Mucosa of descending colon (tissue), 3 donors: ENCODE measurements at regions of chr2 and their contacts with region 1.

Region 1: DNA sequence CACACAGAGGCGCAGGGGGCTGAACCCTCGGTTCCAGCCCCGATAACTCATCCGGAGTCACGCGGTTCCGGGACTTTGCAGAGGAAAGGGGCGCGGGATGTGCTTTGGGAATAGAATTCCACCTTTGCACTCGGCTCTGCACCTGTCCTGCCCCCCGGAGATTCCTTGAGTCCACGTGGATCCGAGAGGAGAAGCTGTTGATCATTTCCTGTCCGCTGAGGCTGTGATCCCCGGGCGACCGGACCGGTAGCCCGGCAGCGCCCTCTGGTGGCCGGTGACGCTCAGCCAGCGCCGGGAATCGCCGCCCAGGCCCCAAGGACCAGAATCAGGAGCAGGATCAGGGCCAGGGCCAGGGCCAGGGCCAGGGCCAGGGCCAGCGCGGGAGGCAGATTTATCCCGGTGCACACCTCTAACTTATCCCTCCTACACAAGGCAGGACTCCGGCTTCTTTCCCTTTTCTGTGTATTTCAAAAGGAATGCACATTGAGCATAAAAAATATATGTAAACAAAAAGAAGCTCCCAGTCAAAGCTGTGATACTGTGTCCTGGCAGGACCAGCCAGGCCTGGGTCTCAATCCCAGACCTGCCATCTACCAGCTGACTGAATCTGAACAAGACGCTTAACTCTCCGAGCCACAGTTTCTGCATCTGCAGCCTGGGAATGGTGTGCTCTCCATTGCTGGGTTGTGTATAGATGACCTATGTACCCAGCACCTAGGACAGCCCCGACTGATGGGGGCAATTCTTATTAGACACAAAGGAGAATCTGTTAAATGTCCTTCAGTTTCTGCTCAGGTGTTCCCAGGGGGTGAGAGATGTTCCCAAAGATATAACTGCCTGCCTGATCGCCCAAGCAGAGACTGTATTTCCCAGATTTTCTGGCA is 8.5 kb upstream of the SPATA3 start:
- DNase-seq: peak; percentile 82 to 91 (median 87)
- ATAC-seq: peak; percentile 96
- H3K4me3 ChIP-seq: no peak overlapping the region
- H3K4me1 ChIP-seq: peaks cover 4% of the 10 kb centered on the region
- CTCF ChIP-seq: peak; percentile 85

Region 2: GRCh38 chr2:230824406-230824978 is 162.9 kb before region 1 on chr2:
- intact Hi-C with region 1: loop called (anchors 5 kb)
- DNase-seq: peak in 1 of 3 donors; percentile 74
- ATAC-seq: peak; percentile 71
- H3K4me3 ChIP-seq: no peak overlapping the region
- H3K4me1 ChIP-seq: peaks cover 13% of the 10 kb centered on the region
- CTCF ChIP-seq: no peak

Region 3: DNA sequence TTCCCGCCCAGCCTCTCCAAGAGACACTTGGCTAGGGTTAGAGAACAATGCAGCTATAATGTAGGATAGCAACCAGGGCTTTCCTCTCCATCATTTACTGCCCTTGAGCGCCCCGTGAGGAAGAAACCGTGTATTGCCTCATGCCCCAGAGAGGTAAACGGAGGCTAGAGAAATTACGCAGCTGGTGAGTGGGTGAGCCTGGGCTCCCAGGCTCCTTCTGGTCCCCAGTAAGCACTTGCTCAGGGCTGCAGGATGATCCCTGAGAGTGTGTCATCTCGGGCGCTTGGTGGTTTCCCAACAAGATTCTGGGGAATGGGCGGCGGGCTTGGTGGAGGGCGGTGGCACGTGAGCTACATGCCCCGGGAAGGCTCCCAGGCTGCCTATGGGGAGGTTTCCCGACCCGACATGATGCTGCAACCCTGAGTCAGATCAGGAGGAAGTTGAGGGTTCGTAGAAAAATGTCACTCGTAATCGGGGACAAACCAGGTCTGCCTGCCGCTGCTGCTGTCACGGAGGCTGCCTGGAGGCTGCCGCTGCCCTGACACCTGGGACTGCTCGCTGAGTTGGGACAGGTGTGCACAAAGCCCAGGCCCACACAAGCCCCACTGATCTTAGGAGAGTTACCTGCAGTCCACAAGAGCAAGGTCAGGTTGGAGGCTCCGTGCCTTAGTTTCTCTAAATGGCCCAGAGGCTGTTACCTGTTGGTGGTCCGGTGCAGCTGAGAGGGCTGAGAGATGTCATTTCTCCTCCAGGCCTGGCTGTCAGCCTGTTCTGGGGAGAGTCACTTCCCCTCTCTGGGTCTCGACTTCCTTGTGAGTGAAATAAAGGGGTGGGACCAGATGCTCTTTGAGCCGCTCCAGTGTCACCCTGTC is 62.7 kb before region 1 on chr2 and contains the start of gene GPR55:
- intact Hi-C with region 1: loop called in 1 of 2 experiments (anchors 10 kb)
- DNase-seq: peak in 2 of 3 donors; percentile 56 to 60
- ATAC-seq: peak; percentile 66
- H3K4me3 ChIP-seq: no peak within 1 kb of the TSS
- H3K4me1 ChIP-seq: no peaks in the 10 kb centered on the region
- CTCF ChIP-seq: no peak
- total RNA-seq, gene GPR55: 0.99 to 1.1 (median 1.1) TPM

Region 4: GRCh38 chr2:231056453-231057424 is 69.4 kb after region 1 on chr2 and contains the start of gene PSMD1:
- intact Hi-C with region 1: no loop called
- DNase-seq: peak; percentile 92 to 97 (median 94)
- ATAC-seq: peak; percentile 93
- H3K4me3 ChIP-seq: peak within 1 kb of the TSS; percentile 98
- H3K4me1 ChIP-seq: peaks cover 27% of the 10 kb centered on the region
- CTCF ChIP-seq: peak; percentile 97
- total RNA-seq, gene PSMD1: 68.1 to 90.4 (median 76.6) TPM